CD8-positive, alpha-beta T cell (primary cell): ENCODE measurements at regions of chr10 and their contacts with region 1.

Region 1: GRCh38 chr10:14954001-14954770 is at the start of gene DCLRE1C:
- DNase-seq: peak; percentile 65 to 93 (median 86)
- ATAC-seq: peak; percentile 84
- H3K4me3 ChIP-seq: peak within 1 kb of the TSS; percentile 79 to 95
- H3K4me3 Mint-ChIP-seq: peak within 1 kb of the TSS; percentile 92
- H3K27ac ChIP-seq: peak within 1 kb of the TSS; percentile 64 to 82
- H3K27ac Mint-ChIP-seq: peak within 1 kb of the TSS; percentile 96
- H3K4me1 ChIP-seq: peaks cover 29% of the 10 kb centered on the region
- H3K4me1 Mint-ChIP-seq: peaks cover 52% of the 10 kb centered on the region
- H3K27me3 ChIP-seq: no peaks in the 10 kb centered on the region
- H3K27me3 Mint-ChIP-seq: no peaks in the 10 kb centered on the region
- CTCF ChIP-seq: no peak
- total RNA-seq, gene DCLRE1C: 15.1 to 15.9 TPM

Region 2: DNA sequence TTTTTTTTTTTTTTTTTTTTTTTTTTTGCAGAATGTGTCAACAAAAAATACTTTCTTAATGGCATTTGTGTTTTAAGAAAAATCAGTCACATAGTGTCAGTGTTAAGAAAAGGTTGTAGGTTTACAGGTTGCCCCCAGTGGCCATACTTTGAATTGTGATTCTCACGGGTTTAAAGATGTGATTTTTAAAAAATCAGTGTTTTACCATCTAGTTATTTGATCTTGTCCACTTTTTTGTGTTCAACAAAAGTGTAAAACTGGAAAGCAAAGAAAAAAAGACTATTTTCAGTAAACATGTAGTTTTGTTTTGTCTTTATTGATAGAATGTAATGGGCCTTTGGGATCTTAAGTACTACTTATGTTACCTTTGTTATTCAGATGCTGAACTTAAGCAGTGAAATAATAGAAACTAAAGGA is 49.9 kb before region 1 on chr10:
- CTCF ChIA-PET with region 1: interaction called, 3 read pairs
- POLR2A ChIA-PET with region 1: interaction called, 5 read pairs
- intact Hi-C with region 1: loop called in 1 of 2 experiments (anchors 5 kb)
- DNase-seq: peak in 4 of 9 experiments; percentile 11 to 58 (median 33)
- ATAC-seq: peak; percentile 82
- H3K4me3 ChIP-seq: no peak overlapping the region
- H3K4me3 Mint-ChIP-seq: no peak overlapping the region
- H3K27ac ChIP-seq: no peak overlapping the region
- H3K27ac Mint-ChIP-seq: peak overlapping the region; percentile 4
- H3K4me1 ChIP-seq: no peaks in the 10 kb centered on the region
- H3K4me1 Mint-ChIP-seq: peaks cover 13% of the 10 kb centered on the region
- H3K27me3 ChIP-seq: no peaks in the 10 kb centered on the region
- H3K27me3 Mint-ChIP-seq: no peaks in the 10 kb centered on the region
- CTCF ChIP-seq: peak; percentile 76

Region 3: GRCh38 chr10:14926722-14927416 is 27.3 kb before region 1 on chr10:
- CTCF ChIA-PET with region 1: no interaction called
- POLR2A ChIA-PET with region 1: no interaction called
- intact Hi-C with region 1: no loop called
- DNase-seq: no peak
- ATAC-seq: no peak
- H3K4me3 ChIP-seq: no peak overlapping the region
- H3K4me3 Mint-ChIP-seq: no peak overlapping the region
- H3K27ac ChIP-seq: no peak overlapping the region
- H3K27ac Mint-ChIP-seq: peak overlapping the region; percentile 11
- H3K4me1 ChIP-seq: no peaks in the 10 kb centered on the region
- H3K4me1 Mint-ChIP-seq: no peaks in the 10 kb centered on the region
- H3K27me3 ChIP-seq: no peaks in the 10 kb centered on the region
- H3K27me3 Mint-ChIP-seq: no peaks in the 10 kb centered on the region
- CTCF ChIP-seq: no peak

Region 4: GRCh38 chr10:14982744-14983143 is 28.6 kb after region 1 on chr10:
- CTCF ChIA-PET with region 1: no interaction called
- POLR2A ChIA-PET with region 1: no interaction called
- intact Hi-C with region 1: no loop called
- DNase-seq: no peak
- ATAC-seq: no peak
- H3K4me3 ChIP-seq: no peak overlapping the region
- H3K4me3 Mint-ChIP-seq: no peak overlapping the region
- H3K27ac ChIP-seq: no peak overlapping the region
- H3K27ac Mint-ChIP-seq: no peak overlapping the region
- H3K4me1 ChIP-seq: no peaks in the 10 kb centered on the region
- H3K4me1 Mint-ChIP-seq: no peaks in the 10 kb centered on the region
- H3K27me3 ChIP-seq: no peaks in the 10 kb centered on the region
- H3K27me3 Mint-ChIP-seq: peaks cover 6% of the 10 kb centered on the region
- CTCF ChIP-seq: no peak

Region 5: DNA sequence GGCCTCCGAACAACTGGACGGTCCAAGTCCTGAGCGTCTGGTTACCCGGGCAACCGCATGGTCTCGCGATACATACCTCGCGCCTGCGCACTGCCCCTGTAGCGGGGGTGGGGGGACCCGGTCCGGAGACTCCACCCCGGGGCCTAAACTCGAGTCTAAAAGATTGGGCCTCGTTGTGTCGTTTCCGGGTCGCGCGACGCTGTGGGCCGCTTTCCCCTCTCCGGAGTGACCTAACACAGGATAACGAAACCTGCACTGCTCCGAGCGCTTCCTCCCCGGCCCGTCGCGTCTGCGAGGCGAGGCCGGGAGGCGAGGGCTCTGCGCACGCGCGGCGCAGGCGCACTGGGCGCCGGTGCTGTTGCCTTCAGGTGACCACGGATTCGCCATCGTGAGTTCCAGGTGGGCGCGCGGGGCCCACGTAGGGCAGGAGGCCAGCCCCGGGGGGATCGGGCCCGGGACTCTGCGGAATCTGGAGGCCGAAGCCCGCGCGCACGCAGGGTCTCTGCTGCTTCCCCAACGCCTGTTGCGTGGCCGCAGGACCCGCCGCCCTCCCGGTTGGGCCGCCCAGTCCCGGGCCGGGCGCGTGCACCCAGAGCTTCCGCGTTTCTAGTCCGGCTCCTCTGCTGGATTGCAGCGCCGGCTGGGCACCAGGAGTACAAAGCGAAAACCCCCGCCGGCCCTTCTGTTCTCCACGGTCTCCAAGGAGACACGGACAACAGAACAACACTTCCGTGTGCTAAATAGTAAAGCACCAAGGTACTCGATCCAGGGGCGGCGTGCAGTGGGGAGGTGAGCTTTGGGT is 143.0 kb after region 1 on chr10 and contains the start of gene RPP38:
- CTCF ChIA-PET with region 1: no interaction called
- POLR2A ChIA-PET with region 1: no interaction called
- intact Hi-C with region 1: loop called (anchors 1 to 5 kb)
- DNase-seq: peak; percentile 85 to 98 (median 95)
- ATAC-seq: peak; percentile 83
- H3K4me3 ChIP-seq: peak within 1 kb of the TSS; percentile 74 to 88
- H3K4me3 Mint-ChIP-seq: peak within 1 kb of the TSS; percentile 97
- H3K27ac ChIP-seq: peak within 1 kb of the TSS; percentile 92 to 96
- H3K27ac Mint-ChIP-seq: peak within 1 kb of the TSS; percentile 97
- H3K4me1 ChIP-seq: peaks cover 28% of the 10 kb centered on the region
- H3K4me1 Mint-ChIP-seq: peaks cover 35% of the 10 kb centered on the region
- H3K27me3 ChIP-seq: no peaks in the 10 kb centered on the region
- H3K27me3 Mint-ChIP-seq: no peaks in the 10 kb centered on the region
- CTCF ChIP-seq: no peak
- total RNA-seq, gene RPP38: 10.6 to 12.3 TPM